ENCODE measurements at regions of chr10 and their contacts with region 1.

Region 1: GRCh38 chr10:63769367-63769766 is 248.2 kb downstream of the REEP3 start:
- DNase-seq: no peak
- ATAC-seq: no peak

Region 2: DNA sequence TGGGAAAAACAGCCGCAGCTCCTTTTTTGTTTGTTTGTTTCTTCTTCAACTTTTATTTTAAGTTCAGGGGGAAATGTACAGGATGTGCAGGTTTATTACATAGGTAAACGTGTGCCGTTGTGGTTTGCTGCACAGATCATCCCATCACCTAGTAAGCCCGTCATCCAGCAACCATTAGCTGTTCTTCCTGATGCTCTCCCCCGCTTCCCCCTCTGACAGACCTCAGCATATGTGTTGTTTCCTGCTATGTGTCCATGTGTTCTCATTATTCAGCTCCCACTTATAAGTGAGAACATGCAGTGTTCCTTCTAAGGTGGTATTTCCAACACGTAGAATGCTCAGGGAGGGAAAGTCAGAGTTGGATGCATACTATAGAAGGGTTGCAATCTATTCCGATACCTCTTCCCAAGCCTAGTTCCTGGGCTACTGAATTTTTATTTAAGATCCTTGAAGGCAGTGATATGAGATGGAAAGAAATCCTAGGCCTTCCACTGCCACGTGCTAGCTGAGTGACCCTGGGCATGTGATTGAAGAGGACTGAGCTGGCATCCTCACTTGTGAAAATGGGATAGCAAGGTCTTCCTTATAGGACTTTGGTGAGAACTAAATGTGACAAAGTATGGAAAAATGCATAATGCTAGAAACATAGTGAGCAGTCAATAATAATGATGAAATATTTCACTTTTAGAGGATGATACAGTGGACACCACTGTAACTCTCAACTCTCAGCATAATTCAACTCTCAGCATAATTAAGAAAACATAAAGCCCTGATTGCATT is 30.3 kb after region 1 on chr10:
- intact Hi-C with region 1: loop called (anchors 2 kb)
- DNase-seq: no peak
- ATAC-seq: peak; percentile 9